AG04449 (cell line): ENCODE measurements at regions of chr14 and their contacts with region 1.

Region 1: GRCh38 chr14:74302634-74303577 is at the start of gene ABCD4:
- DNase-seq: peak; percentile 36
- H3K4me3 ChIP-seq: peak within 1 kb of the TSS; percentile 81
- CTCF ChIP-seq: peak; percentile 49

Region 2: GRCh38 chr14:74275241-74275841 is 27.6 kb before region 1 on chr14:
- CTCF ChIA-PET with region 1: interaction called, 221 read pairs
- POLR2A ChIA-PET with region 1: no interaction called
- DNase-seq: peak; percentile 59
- H3K4me3 ChIP-seq: no peak overlapping the region
- CTCF ChIP-seq: no peak

Region 3: DNA sequence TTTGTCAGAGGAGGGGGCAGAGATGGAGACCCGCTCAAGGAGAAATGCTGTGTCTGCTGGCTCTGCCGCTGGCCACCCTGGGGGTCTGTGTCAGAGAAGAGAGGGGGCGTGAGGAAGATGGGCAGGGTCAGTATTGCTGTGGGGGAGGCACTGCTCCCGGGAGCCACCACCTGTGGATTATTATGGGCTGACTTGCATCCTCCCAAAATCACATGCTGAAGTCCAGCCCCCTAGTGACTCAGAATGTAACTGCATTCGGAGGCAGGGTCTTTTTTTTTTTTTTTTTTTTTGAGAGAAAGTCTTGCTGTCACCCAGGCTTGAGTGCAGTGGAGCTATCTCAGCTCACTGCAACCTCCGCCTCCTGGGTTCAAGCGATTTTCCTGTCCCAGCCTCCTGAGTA is 12.5 kb before region 1 on chr14:
- CTCF ChIA-PET with region 1: interaction called, 221 read pairs
- POLR2A ChIA-PET with region 1: no interaction called
- DNase-seq: no peak
- H3K4me3 ChIP-seq: no peak overlapping the region
- CTCF ChIP-seq: peak; percentile 32